Dendritic cell treated with granulocyte-macrophage colony-stimulating factor and Interleukin-4, amounts not matched to agents 40 ng/mL and 50 ng/mL, for 4 days (primary cell): ENCODE measurements at regions of chr11 and their contacts with region 1.

Region 1: DNA sequence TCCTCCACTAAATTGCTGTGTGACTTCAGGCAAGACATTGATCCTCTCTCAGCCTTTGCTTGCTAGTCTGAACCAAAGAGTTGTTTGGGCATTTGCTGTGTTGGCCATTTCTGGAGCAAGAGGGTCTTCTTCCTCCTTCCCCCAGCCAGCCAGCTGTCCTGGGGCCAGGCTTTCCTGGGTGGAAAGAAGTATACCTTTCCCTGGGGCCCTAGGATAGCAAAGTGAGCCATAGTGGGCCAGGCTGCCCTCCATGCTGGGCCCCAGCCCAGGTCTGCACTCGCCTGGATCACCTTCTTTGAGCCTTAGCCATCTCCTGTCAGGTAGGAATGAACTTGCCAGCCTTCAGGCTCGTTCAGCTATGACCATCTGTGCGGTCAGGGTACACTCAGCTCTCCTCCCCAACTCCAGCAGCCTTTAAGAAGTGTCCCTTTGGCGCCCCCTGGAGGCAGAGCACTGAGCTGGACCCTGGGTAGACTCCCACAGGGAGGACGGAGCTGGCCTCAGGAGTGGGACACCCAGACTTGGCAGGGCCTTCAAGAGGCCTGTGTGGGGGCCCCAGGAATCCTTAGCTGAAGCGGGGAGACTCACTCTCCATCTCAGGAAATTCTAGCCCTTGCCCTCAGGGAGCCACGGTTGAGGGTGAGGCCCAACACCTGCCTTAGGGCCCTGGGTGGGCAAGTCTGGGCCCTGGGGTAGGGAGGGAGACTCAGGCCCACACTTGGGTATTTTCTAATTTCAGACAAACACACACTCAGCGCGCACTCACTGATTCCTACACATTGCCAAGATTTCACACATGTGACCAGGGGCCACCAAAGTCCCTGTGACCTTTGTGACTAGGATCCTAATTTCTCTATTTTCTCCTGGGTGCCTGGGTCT is 35.6 kb upstream of the TPBGL start:
- H3K4me3 Mint-ChIP-seq: no peak overlapping the region
- H3K27ac Mint-ChIP-seq: peak overlapping the region; percentile 77
- H3K4me1 Mint-ChIP-seq: peaks cover 67% of the 10 kb centered on the region
- H3K27me3 Mint-ChIP-seq: peaks cover 9% of the 10 kb centered on the region

Region 2: GRCh38 chr11:75241036-75241905 is 36.3 kb after region 1 on chr11:
- intact Hi-C with region 1: loop called (anchors 5 kb)
- H3K4me3 Mint-ChIP-seq: peak overlapping the region; percentile 51
- H3K27ac Mint-ChIP-seq: no peak overlapping the region
- H3K4me1 Mint-ChIP-seq: peaks cover 15% of the 10 kb centered on the region
- H3K27me3 Mint-ChIP-seq: peaks cover 79% of the 10 kb centered on the region